ENCODE measurements at regions of chr1 and their contacts with region 1.

Region 1: GRCh38 chr1:165144757-165145397 is 211.6 kb downstream of the LMX1A start:
- DNase-seq: peak; percentile 41 to 63 (median 58)
- ATAC-seq: peak; percentile 93
- H3K4me3 ChIP-seq: no peak overlapping the region
- H3K27ac ChIP-seq: no peak overlapping the region
- H3K4me1 ChIP-seq: no peaks in the 10 kb centered on the region
- H3K27me3 ChIP-seq: no peaks in the 10 kb centered on the region; a peak in 1 of 5 replicates
- CTCF ChIP-seq: peak; percentile 61 to 79 (median 77)
- EP300 ChIP-seq: no peak
- POLR2A ChIP-seq: no peak
- RAD21 ChIP-seq: peak; percentile 58 to 67

Region 2: GRCh38 chr1:163410073-163410999 is 1734.5 kb before region 1 on chr1:
- CTCF ChIA-PET with region 1: no interaction called
- POLR2A ChIA-PET with region 1: no interaction called
- in situ Hi-C with region 1: no loop called
- intact Hi-C with region 1: loop called (anchors 10 kb)
- DNase-seq: peak; percentile 30 to 72 (median 45)
- ATAC-seq: peak; percentile 74
- H3K4me3 ChIP-seq: no peak overlapping the region
- H3K27ac ChIP-seq: no peak overlapping the region
- H3K4me1 ChIP-seq: peaks cover 0 to 3% of the 10 kb centered on the region in 2 experiments; a peak in 1 of 5 replicates
- H3K27me3 ChIP-seq: no peaks in the 10 kb centered on the region; a peak in 1 of 5 replicates
- CTCF ChIP-seq: peak; percentile 57 to 85 (median 79)
- EP300 ChIP-seq: no peak
- POLR2A ChIP-seq: no peak
- RAD21 ChIP-seq: peak; percentile 72 to 85

Region 3: GRCh38 chr1:165114022-165114888 is 30.6 kb before region 1 on chr1:
- CTCF ChIA-PET with region 1: no interaction called
- POLR2A ChIA-PET with region 1: no interaction called
- in situ Hi-C with region 1: no loop called
- intact Hi-C with region 1: loop called (anchors 1 kb)
- DNase-seq: peak; percentile 24 to 53 (median 44)
- ATAC-seq: peak; percentile 75
- H3K4me3 ChIP-seq: no peak overlapping the region
- H3K27ac ChIP-seq: no peak overlapping the region
- H3K4me1 ChIP-seq: peaks cover 0 to 3% of the 10 kb centered on the region in 2 experiments; a peak in 1 of 5 replicates
- H3K27me3 ChIP-seq: peaks cover 3 to 13% of the 10 kb centered on the region in 2 experiments; a peak in 2 of 5 replicates
- CTCF ChIP-seq: peak; percentile 57 to 78 (median 78); a peak in 5 of 6 replicates
- EP300 ChIP-seq: no peak
- POLR2A ChIP-seq: no peak
- RAD21 ChIP-seq: peak; percentile 47 to 64

Region 4: GRCh38 chr1:165257969-165258459 is 113.1 kb after region 1 on chr1:
- CTCF ChIA-PET with region 1: no interaction called
- POLR2A ChIA-PET with region 1: no interaction called
- in situ Hi-C with region 1: no loop called
- intact Hi-C with region 1: loop called (anchors 10 kb)
- DNase-seq: peak; percentile 74 to 79 (median 77)
- ATAC-seq: peak; percentile 95
- H3K4me3 ChIP-seq: no peak overlapping the region
- H3K27ac ChIP-seq: no peak overlapping the region
- H3K4me1 ChIP-seq: no peaks in the 10 kb centered on the region
- H3K27me3 ChIP-seq: no peaks in the 10 kb centered on the region; a peak in 1 of 5 replicates
- CTCF ChIP-seq: peak; percentile 67 to 81 (median 80)
- EP300 ChIP-seq: no peak
- POLR2A ChIP-seq: no peak
- RAD21 ChIP-seq: peak; percentile 34 to 63

Region 5: DNA sequence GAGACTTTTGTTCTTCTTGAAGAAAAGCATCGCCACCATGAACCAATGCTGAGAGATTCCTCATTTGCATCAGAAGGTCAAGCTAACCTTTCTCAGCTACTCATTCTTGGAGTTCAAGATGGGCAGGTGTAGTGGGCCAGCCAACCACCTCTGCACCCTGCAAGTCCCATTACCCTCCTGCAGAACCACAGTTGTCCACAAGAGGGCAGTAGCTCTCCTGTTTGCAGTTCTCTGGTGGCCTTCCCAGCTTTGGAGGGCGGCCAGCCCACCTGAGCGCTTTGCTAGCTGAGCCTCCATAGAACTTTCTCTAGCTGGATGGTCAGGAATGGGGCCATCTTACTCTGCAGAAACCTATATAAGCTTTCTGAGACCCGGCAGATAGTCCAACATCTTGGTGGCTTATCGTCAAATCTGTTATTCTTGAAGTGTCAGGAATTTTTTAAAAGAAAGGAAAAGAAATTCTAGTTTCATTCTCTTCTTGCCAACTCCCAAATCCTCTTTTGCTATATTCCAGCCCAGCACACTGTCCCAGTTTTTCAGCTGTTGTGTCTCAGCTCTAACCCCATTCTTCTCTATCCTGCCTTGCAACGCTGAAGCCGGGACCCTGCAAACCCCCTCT is 222.6 kb after region 1 on chr1:
- CTCF ChIA-PET with region 1: interaction called, 6 read pairs
- POLR2A ChIA-PET with region 1: no interaction called
- in situ Hi-C with region 1: loop called (anchors 10 kb)
- intact Hi-C with region 1: loop called (anchors 1 kb)
- DNase-seq: peak; percentile 80 to 90 (median 86)
- ATAC-seq: peak; percentile 90
- H3K4me3 ChIP-seq: no peak overlapping the region
- H3K27ac ChIP-seq: no peak overlapping the region
- H3K4me1 ChIP-seq: no peaks in the 10 kb centered on the region
- H3K27me3 ChIP-seq: peaks cover 0 to 6% of the 10 kb centered on the region in 2 experiments; a peak in 1 of 5 replicates
- CTCF ChIP-seq: peak; percentile 76 to 94 (median 80)
- EP300 ChIP-seq: no peak
- POLR2A ChIP-seq: no peak
- RAD21 ChIP-seq: peak; percentile 29 to 45